ENCODE measurements at regions of chr22 and their contacts with region 1.

Region 1: GRCh38 chr22:50627642-50628542 is at the start of gene ARSA:
- DNase-seq: peak; percentile 77
- H3K4me3 ChIP-seq: peak within 1 kb of the TSS; percentile 31 to 56 (median 47)
- H3K27ac ChIP-seq: no peak within 1 kb of the TSS
- H3K4me1 ChIP-seq: peaks cover 10% of the 10 kb centered on the region
- H3K27me3 ChIP-seq: no peaks in the 10 kb centered on the region
- CTCF ChIP-seq: peak; percentile 12 to 54
- POLR2A ChIP-seq: peak; percentile 89
- total RNA-seq, gene ARSA: 19.3 and 22.3 TPM in 2 replicates

Region 2: DNA sequence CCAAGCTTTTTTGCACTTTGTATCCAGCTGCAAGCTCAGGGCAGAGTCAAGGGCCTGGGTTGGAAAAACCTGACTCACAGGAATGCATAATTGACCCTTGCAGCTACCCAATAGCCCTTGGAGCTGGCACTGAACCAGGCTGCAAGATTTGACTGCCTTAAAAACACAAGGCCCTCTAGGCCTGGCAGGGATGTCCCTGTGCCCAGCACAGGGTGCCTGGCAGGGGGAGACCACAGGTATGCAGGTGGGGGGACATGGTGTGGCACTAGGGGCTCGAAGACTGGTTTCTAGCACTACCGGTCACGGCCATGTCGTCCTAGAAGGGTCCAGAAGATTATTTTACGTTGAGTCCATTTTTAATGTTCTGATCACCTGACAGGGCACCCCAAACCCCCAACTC is 183.2 kb before region 1 on chr22:
- CTCF ChIA-PET with region 1: no interaction called
- POLR2A ChIA-PET with region 1: no interaction called
- dilution Hi-C with region 1: no loop called
- intact Hi-C with region 1: no loop called
- DNase-seq: peak; percentile 62
- H3K4me3 ChIP-seq: no peak overlapping the region
- H3K27ac ChIP-seq: no peak overlapping the region
- H3K4me1 ChIP-seq: peaks cover 6% of the 10 kb centered on the region
- H3K27me3 ChIP-seq: no peaks in the 10 kb centered on the region
- CTCF ChIP-seq: no peak
- POLR2A ChIP-seq: no peak

Region 3: DNA sequence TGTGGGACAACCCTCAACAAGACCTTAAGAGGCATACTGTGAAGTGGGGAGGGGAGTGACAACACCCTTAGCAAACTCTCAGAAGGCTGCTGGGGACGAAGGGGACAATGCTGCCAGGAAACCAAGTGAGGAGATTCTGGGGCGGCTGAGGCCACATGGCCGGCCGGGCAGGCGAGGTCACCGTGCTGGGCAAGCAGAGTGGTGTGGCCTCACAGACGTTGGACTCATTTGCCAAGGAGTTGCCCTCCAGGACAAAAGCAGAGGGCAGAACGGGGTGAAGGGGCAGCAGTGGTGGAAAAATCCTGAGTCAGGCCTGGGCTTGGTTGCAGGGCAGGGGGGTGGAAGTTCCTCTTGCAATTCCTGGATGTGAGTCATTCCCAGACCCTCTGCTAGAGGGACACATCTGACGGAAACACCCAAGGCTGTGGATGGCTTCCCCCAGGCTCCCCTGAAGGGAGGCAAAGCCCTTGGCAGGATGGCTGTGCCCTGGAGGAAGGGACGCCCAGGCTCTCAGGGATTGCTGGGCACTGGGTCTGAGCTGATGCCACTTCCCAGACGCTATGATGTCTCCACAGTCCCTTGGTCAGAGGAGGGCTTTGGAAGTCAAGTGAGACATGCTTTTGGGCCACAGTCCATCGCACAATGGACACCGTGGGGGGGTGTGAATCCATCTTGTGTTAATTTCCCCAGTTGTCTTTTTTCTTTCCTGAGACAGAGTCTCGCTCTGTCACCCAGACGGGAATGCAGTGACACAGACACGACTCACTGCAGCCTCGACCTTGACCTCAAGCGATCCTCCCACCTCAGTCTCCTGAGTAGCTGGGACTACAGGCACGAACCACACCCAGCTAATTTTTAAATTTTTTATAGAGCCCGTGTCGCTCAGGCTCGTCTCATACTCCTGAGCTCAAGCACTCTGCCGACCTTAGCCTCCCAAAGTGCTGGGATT is 28.5 kb after region 1 on chr22:
- CTCF ChIA-PET with region 1: interaction called, 5 read pairs
- POLR2A ChIA-PET with region 1: no interaction called
- dilution Hi-C with region 1: no loop called
- intact Hi-C with region 1: loop called (anchors 1 kb)
- DNase-seq: peak; percentile 96
- H3K4me3 ChIP-seq: no peak overlapping the region
- H3K27ac ChIP-seq: peak overlapping the region; percentile 86
- H3K4me1 ChIP-seq: peaks cover 29% of the 10 kb centered on the region
- H3K27me3 ChIP-seq: no peaks in the 10 kb centered on the region
- CTCF ChIP-seq: no peak
- POLR2A ChIP-seq: peak; percentile 88